OCI-LY7 (cell line): ENCODE measurements at regions of chr6 and their contacts with region 1.

Region 1: GRCh38 chr6:41545703-41546474 is at the start of gene FOXP4:
- DNase-seq: peak; percentile 94
- H3K4me3 ChIP-seq: peak within 1 kb of the TSS; percentile 94
- H3K27ac ChIP-seq: peak within 1 kb of the TSS; percentile 61
- H3K4me1 ChIP-seq: peaks cover 28% of the 10 kb centered on the region
- CTCF ChIP-seq: no peak
- total RNA-seq, gene FOXP4: 5.1 and 6.3 TPM in 2 replicates

Region 2: GRCh38 chr6:41424370-41425058 is 121.4 kb before region 1 on chr6:
- CTCF ChIA-PET with region 1: no interaction called
- POLR2A ChIA-PET with region 1: no interaction called
- intact Hi-C with region 1: loop called (anchors 2 kb)
- DNase-seq: peak; percentile 77
- H3K4me3 ChIP-seq: no peak overlapping the region
- H3K27ac ChIP-seq: no peak overlapping the region
- H3K4me1 ChIP-seq: peaks cover 10% of the 10 kb centered on the region
- CTCF ChIP-seq: peak; percentile 93